HEK293T (cell line): ENCODE measurements at regions of chr5 and their contacts with region 1.

Region 1: DNA sequence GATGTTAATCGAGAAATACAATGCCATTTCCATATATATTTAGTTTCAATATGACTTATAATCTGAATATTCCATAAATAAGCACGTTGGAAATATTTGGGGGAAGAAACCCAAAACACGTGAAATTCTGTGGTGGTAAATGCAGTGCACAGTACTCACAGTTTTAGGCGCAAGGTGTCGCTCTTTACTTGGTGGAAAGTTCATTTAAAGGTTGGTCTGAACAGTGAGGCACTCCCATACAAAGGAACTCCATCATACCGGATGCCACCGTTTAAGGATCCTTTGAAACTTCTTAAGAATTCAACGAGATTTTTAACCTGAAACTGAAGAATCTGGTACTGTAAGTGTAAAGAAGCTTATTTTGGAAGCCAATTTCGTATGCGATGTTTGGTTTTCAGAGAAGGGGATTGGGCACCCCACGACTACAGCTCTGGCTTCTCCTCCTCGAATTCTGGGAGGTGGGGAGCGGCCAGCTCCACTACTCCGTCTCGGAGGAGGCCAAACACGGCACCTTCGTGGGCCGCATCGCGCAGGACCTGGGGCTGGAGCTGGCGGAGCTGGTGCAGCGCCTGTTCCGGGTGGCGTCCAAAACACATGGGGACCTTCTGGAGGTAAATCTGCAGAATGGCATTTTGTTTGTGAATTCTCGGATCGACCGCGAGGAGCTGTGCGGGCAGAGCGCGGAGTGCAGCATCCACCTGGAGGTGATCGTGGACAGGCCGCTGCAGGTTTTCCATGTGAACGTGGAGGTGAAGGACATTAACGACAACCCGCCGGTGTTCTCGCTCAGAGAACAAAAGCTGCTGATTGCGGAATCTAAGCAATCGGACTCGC is at the start of gene PCDHA11:
- DNase-seq: peak; percentile 52

Region 2: GRCh38 chr5:140806834-140807775 is 61.8 kb before region 1 on chr5 and contains the start of gene PCDHA4:
- CTCF ChIA-PET with region 1: no interaction called
- POLR2A ChIA-PET with region 1: no interaction called
- DNase-seq: no peak

Region 3: GRCh38 chr5:140855772-140856674 is 12.9 kb before region 1 on chr5 and contains the start of gene PCDHA10:
- CTCF ChIA-PET with region 1: interaction called, 14 read pairs
- POLR2A ChIA-PET with region 1: no interaction called
- DNase-seq: peak; percentile 14

Region 4: DNA sequence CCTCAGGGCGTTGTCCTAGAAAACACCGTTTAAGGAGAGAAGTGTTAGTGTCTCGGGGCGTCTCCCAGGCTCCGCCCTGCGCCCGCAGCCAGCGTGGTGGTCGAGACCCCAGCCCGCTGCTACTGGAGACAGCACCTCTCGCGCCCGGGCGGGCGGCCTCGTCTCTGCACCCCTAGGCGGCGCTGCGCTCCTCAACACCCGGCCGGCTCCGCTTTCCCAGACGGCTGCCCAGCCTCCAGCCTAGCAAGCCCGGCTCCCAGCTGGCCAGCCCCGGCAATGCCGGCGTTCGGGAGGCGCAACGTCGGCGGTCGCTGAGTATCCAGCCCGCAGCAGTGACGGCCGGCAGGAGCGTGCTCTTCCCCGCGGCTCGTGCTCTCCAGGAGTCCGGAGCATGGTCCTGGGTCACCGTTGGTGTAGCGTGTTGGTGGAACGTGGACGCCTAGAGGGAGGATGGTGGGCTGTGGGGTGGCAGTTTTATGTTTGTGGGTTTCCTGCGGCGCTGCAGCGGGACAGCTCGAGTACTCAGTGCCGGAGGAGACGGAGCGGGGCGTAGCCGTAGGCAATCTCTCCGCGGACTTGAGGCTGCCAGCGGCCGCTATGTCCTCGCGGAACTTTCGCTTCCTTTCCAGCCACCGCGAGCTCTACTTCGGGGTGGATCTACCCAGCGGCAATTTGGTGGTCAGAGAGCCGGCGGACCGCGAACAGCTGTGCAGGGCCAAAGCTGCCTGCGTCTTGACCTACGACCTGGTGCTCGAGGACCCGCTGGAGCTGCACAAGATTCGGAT is 57.7 kb after region 1 on chr5:
- CTCF ChIA-PET with region 1: interaction called, 18 read pairs
- POLR2A ChIA-PET with region 1: interaction called, 4 read pairs
- DNase-seq: peak; percentile 73

Region 5: GRCh38 chr5:141040771-141041426 is 172.0 kb after region 1 on chr5:
- CTCF ChIA-PET with region 1: interaction called, 80 read pairs
- POLR2A ChIA-PET with region 1: interaction called, 33 read pairs
- DNase-seq: peak; percentile 91